ENCODE measurements at regions of chr11 and their contacts with region 1.

Region 1: DNA sequence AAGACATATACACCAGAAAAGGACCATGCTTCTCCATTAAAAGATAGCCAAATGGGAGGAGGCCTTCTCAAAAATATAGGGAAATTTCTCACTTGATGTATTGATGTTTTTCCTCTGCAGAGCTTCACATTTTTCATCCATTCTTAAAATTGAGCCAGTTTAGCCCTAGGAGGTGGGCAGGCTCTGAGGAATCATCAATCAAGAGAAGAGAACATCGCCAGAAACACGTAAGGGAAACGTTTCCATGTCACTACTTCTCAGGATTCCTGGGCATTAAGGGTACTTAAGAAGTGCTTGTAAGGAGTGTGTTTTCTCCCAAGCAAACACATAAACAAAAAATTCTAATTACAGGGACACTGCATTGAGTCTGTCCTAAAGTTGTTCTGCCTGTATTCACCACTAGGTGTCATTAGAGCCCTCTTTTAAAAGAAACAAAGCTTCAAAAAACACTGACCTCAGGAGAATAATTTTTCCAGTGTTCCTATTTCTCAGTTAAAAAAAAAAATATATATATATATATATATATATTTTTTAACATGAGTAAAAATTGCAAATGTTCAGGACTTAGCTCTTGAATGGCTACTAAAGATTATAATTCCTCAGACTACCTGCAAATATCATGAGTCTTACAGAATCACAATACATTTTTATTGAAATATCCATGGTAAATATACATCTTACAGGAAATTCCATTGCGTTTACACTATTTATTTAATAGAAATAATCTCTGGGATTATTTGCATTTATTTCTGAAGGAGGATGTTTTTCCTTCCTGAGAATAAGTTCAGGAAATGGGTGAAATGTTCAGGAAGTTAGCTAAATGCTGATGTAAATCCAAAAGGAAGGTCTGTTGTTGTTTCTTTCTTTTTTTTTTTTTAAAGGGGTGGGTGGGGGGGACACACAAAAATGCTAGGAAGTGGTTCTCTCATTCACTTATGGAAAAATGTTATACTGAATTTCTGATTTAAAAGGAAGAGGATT is 16.0 kb downstream of the FZD4 start:
- DNase-seq: no peak
- ATAC-seq: peak; percentile 37 to 48 (median 46)
- H3K4me3 ChIP-seq: no peak overlapping the region
- H3K27ac ChIP-seq: peak overlapping the region; percentile 80 to 95 (median 82)
- H3K4me1 ChIP-seq: peaks cover 0 to 36% (median 21%) of the 10 kb centered on the region in 4 donors
- H3K27me3 ChIP-seq: no peaks in the 10 kb centered on the region
- CTCF ChIP-seq: peak; percentile 54 to 77 (median 71)
- POLR2A ChIP-seq: no peak

Region 2: GRCh38 chr11:87281496-87281895 is 342.3 kb after region 1 on chr11:
- intact Hi-C with region 1: loop called (anchors 10 kb)
- DNase-seq: no peak
- ATAC-seq: peak; percentile 56 to 82 (median 68)
- H3K4me3 ChIP-seq: no peak overlapping the region
- H3K27ac ChIP-seq: no peak overlapping the region
- H3K4me1 ChIP-seq: peaks cover 0 to 23% (median 0%) of the 10 kb centered on the region in 4 donors
- H3K27me3 ChIP-seq: no peaks in the 10 kb centered on the region
- CTCF ChIP-seq: peak; percentile 20 to 30 (median 26)
- POLR2A ChIP-seq: no peak

Measured in right lobe of liver (tissue), 6 donors.